ENCODE measurements at regions of chr14 and their contacts with region 1.

Region 1: DNA sequence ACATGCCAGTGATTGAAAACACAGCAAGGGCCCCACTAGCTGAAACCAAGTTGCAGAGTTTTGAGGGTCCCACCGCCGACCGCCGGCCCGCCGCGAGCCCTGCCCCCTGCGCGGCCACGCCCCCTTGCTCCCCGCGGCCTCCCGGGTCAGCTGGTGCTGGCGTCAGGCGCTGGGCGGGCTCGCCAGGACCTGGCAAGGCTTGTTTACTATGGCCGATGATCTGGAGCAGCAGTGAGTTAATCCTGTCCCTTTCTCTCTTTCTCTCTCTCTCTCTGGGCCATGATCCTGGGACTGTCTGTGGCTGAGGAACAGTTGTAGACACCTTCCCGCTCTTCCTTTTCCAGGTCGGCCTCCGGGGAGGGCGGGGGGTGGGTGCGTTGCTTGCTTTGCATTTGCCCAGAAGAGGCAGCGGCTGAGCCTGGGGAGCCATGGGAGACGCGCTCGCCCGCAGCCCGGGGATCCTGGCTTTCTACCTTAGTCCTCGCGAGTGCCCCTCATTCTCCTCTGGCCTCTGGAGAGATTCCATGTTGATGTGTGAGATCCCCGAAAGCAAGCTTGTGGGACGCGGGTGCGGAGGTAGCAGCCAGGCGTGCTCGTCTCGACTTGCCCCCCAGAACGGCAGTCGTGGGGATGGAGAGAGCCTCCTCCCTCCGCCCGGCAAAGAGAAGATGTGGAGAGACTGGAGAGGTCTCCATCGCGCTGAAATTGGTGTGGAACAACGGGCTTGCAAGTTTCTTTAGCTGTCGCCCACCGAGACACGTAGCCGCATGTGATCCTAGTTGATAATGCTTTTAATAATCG is at the start of gene ABHD4:
- DNase-seq: peak; percentile 73 to 86 (median 83)
- H3K4me3 ChIP-seq: peak within 1 kb of the TSS; percentile 76
- H3K27ac ChIP-seq: peak within 1 kb of the TSS; percentile 22 to 49
- H3K4me1 ChIP-seq: no peaks in the 10 kb centered on the region
- H3K27me3 ChIP-seq: no peaks in the 10 kb centered on the region
- CTCF ChIP-seq: peak in 1 of 3 donors; percentile 15
- EP300 ChIP-seq: no peak
- POLR2A ChIP-seq: no peak
- total RNA-seq, gene ABHD4: 5.6 to 28.6 (median 18.8) TPM

Region 2: DNA sequence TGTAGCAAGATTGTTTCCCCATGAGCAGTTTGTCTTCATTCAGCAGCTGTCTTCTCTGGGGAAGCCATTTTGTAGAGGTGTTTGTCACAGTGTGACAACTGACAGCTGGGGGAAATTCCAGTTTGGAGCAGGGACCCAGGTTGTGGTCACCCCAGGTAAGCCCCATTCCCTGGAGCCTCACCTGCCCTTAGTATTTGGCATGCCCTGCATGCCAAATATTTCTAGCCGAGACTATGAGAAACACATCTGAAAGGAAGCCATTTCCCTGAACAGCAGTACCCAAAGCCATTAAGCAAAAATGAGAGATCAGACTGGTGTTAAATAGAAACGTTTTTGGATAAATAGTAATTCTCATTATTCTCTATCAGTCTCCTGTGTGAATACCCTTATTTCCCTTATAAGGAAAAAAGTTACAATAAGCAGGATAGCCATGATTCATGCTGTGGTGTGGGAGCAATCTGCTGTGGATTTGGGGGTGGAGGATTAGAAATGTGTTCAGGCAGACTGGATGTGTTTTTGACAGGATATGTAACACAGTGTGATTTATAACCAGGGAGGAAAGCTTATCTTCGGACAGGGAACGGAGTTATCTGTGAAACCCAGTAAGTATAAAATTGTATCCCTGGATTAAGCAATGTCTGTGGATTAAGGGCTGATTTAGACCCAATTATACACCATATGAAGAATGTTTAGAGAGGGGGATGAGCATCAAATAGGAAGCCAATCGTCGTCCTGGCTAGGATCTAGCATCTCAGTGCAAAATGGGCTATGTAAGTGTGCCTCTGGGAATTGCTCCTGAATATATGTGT is 78.2 kb before region 1 on chr14:
- intact Hi-C with region 1: no loop called
- DNase-seq: no peak
- H3K4me3 ChIP-seq: no peak overlapping the region
- H3K27ac ChIP-seq: no peak overlapping the region
- H3K4me1 ChIP-seq: no peaks in the 10 kb centered on the region
- H3K27me3 ChIP-seq: no peaks in the 10 kb centered on the region
- CTCF ChIP-seq: no peak
- EP300 ChIP-seq: no peak
- POLR2A ChIP-seq: no peak

Region 3: DNA sequence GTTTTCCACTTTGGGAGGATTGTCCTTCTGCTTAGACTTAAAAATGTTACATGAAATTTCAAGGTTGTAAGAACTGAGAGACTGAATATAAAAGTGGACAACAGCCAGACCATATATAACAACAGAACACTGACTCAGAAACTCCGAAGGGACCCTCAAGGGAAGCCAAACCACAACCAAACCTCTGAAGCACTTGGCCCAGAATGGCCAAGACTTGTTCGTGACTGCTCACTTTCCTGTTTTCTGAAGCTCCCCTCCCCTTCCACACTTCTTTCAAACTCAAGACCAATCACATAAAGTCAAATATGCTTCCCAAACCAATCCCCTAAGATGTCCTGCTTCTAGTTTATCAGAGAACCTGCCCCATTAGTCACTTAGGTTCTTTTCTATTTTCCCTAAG is 32.2 kb after region 1 on chr14:
- intact Hi-C with region 1: no loop called
- DNase-seq: no peak
- H3K4me3 ChIP-seq: no peak overlapping the region
- H3K27ac ChIP-seq: no peak overlapping the region
- H3K4me1 ChIP-seq: no peaks in the 10 kb centered on the region
- H3K27me3 ChIP-seq: no peaks in the 10 kb centered on the region
- CTCF ChIP-seq: no peak
- EP300 ChIP-seq: no peak
- POLR2A ChIP-seq: no peak

Region 4: DNA sequence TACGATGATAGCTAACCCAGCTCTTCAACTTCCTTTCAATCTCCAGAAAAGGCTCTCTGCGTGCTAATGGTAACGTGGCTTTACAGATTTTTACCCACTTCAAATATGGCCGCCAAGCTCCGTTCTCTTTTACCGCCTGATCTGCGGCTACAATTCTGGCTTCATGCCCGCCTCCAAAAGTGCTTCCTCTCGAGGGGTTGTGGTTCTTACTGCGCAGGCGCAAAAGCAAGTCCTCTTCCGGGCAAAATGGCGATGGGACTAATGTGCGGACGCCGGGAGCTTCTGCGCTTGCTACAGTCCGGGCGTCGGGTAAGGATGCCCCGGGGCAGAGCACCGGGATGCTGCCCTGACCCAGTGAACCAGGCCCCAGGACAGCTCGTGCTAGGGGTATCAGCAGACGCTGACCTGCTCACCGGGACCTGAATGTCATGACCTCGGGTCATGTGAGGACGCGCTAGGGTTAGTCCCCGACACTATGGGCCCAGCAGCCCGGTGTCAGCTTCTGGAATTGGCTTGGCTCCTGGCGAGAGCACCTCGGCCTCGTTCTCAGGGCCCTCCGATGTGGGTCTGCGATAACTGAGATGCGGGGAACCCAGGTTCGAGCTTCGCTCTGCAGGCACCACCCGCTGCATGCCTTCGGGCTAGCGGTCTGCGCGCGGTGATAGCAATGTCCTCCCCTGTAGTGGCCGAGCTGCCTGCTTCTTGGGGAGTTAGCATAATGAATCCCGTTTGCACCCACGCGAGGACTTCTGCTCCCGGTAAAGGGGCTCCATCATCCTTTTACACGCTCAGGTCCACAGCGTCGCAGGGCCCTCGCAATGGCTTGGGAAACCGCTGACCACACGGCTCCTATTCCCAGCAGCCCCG is 168.4 kb after region 1 on chr14 and contains the start of gene OXA1L:
- intact Hi-C with region 1: loop called in 1 of 4 experiments (anchors 10 kb)
- DNase-seq: peak; percentile 97 to 99 (median 99)
- H3K4me3 ChIP-seq: peak within 1 kb of the TSS; percentile 58
- H3K27ac ChIP-seq: peak within 1 kb of the TSS in 1 of 2 donors; percentile 58
- H3K4me1 ChIP-seq: peaks cover 2% of the 10 kb centered on the region
- H3K27me3 ChIP-seq: no peaks in the 10 kb centered on the region
- CTCF ChIP-seq: no peak
- EP300 ChIP-seq: no peak
- POLR2A ChIP-seq: peak; percentile 41
- total RNA-seq, gene OXA1L: 52.7 to 99.3 (median 83.8) TPM